Mammary epithelial cell (primary cell): ENCODE measurements at regions of chr6 and their contacts with region 1.

Region 1: GRCh38 chr6:46781478-46782378 is 11.5 kb upstream of the MEP1A start:
- DNase-seq: peak; percentile 57
- H3K4me3 ChIP-seq: no peak overlapping the region
- H3K27ac ChIP-seq: no peak overlapping the region
- H3K4me1 ChIP-seq: no peaks in the 10 kb centered on the region
- H3K27me3 ChIP-seq: no peaks in the 10 kb centered on the region
- CTCF ChIP-seq: peak; percentile 70 to 78

Region 2: GRCh38 chr6:46637145-46637544 is 144.6 kb before region 1 on chr6:
- CTCF ChIA-PET with region 1: no interaction called
- dilution Hi-C with region 1: no loop called
- in situ Hi-C with region 1: no loop called
- intact Hi-C with region 1: loop called (anchors 5 kb)
- DNase-seq: peak; percentile 92
- H3K4me3 ChIP-seq: no peak overlapping the region
- H3K27ac ChIP-seq: peak overlapping the region; percentile 57
- H3K4me1 ChIP-seq: peaks cover 24% of the 10 kb centered on the region
- H3K27me3 ChIP-seq: no peaks in the 10 kb centered on the region
- CTCF ChIP-seq: no peak

Region 3: DNA sequence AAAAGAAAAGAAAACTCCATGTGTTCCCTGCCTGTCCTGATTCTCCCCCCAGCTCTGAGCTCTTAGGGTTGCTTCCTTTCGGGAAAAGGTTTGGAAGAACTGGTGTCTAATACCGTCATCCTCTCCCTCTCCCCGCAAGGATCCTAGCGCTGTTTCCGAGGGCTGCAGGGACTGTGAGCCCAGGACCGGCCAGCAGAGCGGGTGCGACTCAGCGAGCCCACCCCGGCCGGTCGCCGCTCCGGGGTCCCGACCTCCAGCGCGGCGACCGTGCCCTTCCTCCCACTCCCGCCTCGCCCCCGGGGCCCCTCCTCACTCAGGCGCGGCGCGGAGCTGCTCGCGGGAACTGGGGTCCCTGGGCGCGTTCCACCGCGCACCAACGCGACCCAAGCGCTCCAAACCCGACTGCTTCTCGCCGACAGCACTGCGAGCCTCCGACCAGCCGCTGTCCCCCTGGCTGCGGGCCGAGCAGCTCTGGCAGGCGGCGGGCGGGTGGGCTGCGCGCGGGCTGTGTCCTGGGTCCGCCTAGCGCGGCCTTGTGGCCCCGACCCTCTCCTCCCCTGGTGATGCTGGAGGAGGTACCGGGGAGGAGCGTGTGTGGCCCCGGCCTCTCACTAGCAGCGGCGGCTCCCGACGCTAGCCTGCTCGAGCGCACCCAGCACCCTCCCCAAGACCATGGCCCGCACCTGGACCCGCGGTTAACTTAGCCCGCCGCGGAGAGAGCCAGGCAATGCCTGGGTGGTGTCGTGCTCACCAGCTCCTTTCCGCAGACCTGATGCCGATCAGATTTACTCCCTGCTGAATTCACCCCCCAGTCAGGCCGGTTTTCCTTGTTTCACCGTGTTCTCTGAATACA is 46.6 kb before region 1 on chr6 and contains the start of gene PLA2G7:
- CTCF ChIA-PET with region 1: no interaction called
- dilution Hi-C with region 1: no loop called
- in situ Hi-C with region 1: no loop called
- intact Hi-C with region 1: loop called (anchors 5 kb)
- DNase-seq: peak; percentile 57
- H3K4me3 ChIP-seq: peak within 1 kb of the TSS; percentile 57 to 66 (median 57)
- H3K27ac ChIP-seq: peak within 1 kb of the TSS; percentile 55
- H3K4me1 ChIP-seq: peaks cover 42% of the 10 kb centered on the region
- H3K27me3 ChIP-seq: no peaks in the 10 kb centered on the region
- CTCF ChIP-seq: peak in 1 of 2 donors; percentile 1
- total RNA-seq, gene PLA2G7: 5.7 to 5.9 TPM

Region 4: DNA sequence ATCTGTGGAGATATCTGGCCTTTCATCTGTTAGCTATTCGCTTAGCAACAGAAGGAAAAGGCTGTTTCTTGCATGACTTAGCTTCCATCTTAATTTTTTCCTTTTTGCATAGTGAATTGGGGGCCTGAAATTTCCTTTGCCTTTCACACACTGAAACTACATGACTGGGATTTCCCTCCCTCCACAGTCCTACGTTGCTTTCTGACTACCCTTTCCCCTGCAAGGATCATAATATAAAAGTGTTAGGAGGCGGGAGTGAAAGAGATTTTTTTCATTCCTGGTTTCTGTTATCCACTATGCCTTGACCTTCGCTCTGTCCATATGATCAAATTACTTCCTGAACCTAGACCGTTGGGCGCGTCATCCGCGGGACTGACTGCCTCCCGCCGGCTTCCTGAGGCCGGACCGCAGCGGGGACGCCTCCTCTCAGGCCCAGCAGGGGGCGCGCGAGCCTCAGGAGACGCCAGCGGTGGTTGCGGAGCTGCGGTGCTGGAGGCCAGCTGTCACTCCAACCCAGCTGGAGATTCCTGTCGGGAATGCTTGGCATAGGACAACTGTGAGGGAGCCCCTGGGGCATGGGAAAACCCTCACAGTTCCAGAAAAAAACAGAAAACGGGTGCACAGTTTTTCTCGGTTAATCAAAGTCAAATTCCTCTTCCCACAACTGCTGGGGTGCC is 67.1 kb after region 1 on chr6:
- CTCF ChIA-PET with region 1: no interaction called
- dilution Hi-C with region 1: no loop called
- in situ Hi-C with region 1: no loop called
- intact Hi-C with region 1: loop called (anchors 5 kb)
- DNase-seq: peak; percentile 73
- H3K4me3 ChIP-seq: no peak overlapping the region
- H3K27ac ChIP-seq: no peak overlapping the region
- H3K4me1 ChIP-seq: peaks cover 15% of the 10 kb centered on the region
- H3K27me3 ChIP-seq: no peaks in the 10 kb centered on the region
- CTCF ChIP-seq: peak; percentile 69 to 96